ENCODE measurements at regions of chr4 and their contacts with region 1.

Region 1: GRCh38 chr4:69881173-69881773 is 21.3 kb upstream of the SULT1E1 start:
- DNase-seq: peak; percentile 61
- H3K4me3 ChIP-seq: no peak overlapping the region
- H3K27ac ChIP-seq: peak overlapping the region; percentile 17
- H3K4me1 ChIP-seq: peaks cover 6% of the 10 kb centered on the region
- H3K27me3 ChIP-seq: no peaks in the 10 kb centered on the region
- CTCF ChIP-seq: peak; percentile 70 to 81
- POLR2A ChIP-seq: no peak

Region 2: GRCh38 chr4:69322055-69322454 is 559.2 kb before region 1 on chr4:
- CTCF ChIA-PET with region 1: interaction called, 8 read pairs
- POLR2A ChIA-PET with region 1: no interaction called
- dilution Hi-C with region 1: no loop called
- intact Hi-C with region 1: loop called (anchors 1 kb)
- DNase-seq: no peak
- H3K4me3 ChIP-seq: no peak overlapping the region
- H3K27ac ChIP-seq: no peak overlapping the region
- H3K4me1 ChIP-seq: no peaks in the 10 kb centered on the region
- H3K27me3 ChIP-seq: no peaks in the 10 kb centered on the region
- CTCF ChIP-seq: no peak
- POLR2A ChIP-seq: no peak

Region 3: DNA sequence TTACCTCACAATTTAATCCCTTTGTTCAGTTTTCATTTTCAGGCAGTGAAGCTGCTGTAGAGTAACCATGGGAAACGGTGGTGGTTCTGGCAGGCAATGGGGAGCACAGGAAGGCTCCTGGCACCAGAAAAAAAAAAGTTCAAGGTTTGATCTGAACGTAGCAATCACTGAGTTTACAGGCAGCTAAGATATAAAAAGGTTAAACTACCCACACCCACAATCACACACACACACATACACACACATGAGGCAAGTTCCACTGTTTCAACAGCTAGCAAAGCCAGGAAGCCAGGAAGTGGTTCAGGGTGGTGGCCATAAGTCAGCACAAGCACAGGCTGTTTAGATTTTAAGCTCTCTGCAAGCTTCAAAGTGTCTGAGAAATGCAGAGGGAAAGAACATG is 120.8 kb before region 1 on chr4 and contains the start of gene SULT1B1:
- CTCF ChIA-PET with region 1: interaction called, 8 read pairs
- POLR2A ChIA-PET with region 1: no interaction called
- dilution Hi-C with region 1: no loop called
- intact Hi-C with region 1: loop called (anchors 1 kb)
- DNase-seq: peak; percentile 89
- H3K4me3 ChIP-seq: peak within 1 kb of the TSS; percentile 21 to 79 (median 27)
- H3K27ac ChIP-seq: peak within 1 kb of the TSS; percentile 95
- H3K4me1 ChIP-seq: peaks cover 69% of the 10 kb centered on the region
- H3K27me3 ChIP-seq: no peaks in the 10 kb centered on the region
- CTCF ChIP-seq: no peak
- POLR2A ChIP-seq: no peak
- total RNA-seq, gene SULT1B1: 59.5 and 68.2 TPM in 2 replicates

Region 4: DNA sequence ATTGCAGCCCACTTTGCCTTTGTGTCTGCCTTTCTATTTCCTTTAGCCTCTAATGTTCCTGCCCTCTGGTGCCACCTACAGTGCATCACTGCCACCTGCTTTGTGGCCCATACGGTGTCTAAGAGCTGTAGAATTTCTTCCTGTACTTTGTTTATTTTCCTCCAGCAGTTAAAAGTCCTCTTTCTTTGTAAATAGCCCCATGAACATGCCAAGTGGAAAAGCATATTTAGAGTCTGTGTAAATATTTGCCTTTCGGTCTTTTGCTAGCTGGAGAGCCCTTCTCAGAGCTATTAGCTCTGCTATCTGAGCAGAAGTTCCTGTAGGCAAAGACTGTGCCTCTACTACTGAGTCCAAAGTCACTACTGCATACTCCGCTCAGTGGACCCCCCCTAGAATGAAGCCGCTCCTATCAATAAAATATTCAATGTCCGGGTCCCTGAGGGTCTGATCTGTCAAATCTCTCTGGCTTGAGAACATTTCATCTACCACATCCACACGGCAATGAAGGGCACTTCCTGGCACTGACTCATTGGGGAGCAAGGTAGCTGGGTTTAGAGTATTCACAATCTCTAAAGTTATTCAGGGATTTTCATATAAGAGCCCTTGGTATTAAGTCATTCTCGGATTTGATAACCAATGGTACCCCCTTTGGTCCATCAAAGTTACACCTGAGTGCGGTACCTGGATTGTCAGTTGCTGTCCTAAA is 57.6 kb before region 1 on chr4:
- CTCF ChIA-PET with region 1: interaction called, 34 read pairs
- POLR2A ChIA-PET with region 1: interaction called, 3 read pairs
- dilution Hi-C with region 1: no loop called
- intact Hi-C with region 1: loop called (anchors 1 kb)
- DNase-seq: peak; percentile 76
- H3K4me3 ChIP-seq: no peak overlapping the region
- H3K27ac ChIP-seq: peak overlapping the region; percentile 22
- H3K4me1 ChIP-seq: peaks cover 11% of the 10 kb centered on the region
- H3K27me3 ChIP-seq: no peaks in the 10 kb centered on the region
- CTCF ChIP-seq: peak; percentile 57 to 59
- POLR2A ChIP-seq: no peak

Region 5: DNA sequence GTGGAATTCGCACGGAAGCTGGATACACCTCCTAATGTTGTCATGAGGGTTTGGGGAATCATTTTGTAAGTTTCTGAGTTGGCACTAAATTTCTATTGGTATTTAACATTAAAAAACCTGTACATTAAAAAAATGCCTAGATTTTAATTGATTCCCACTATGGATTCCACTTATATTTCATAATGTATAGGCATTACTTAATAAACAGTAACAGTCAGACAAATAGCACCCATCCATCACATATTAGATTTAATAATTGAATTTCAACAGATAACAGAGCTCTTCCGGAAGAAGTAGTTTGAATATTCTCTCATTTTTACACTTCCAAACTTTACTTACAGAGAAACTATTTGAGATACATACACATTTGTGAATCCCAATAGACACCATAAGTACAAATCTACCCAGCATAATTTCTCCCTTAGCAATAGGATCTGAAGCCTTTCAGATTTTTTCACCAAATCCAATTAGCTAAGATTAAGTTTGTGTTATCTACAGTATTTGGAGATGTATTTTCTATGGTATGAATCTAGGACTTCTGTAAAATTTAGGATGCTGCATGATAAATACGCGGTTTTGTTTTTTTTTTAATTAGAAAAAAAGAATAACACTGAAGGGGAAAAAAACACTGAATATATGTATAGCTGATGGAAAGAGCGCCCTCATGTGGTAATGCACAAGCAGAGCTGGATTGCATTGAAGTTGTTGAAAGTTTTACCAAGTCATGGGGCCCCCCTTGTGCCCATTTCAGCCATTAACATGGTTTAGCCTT is 302.1 kb after region 1 on chr4:
- CTCF ChIA-PET with region 1: interaction called, 23 read pairs
- POLR2A ChIA-PET with region 1: no interaction called
- dilution Hi-C with region 1: no loop called
- intact Hi-C with region 1: loop called (anchors 1 kb)
- DNase-seq: peak; percentile 53
- H3K4me3 ChIP-seq: no peak overlapping the region
- H3K27ac ChIP-seq: no peak overlapping the region
- H3K4me1 ChIP-seq: no peaks in the 10 kb centered on the region
- H3K27me3 ChIP-seq: no peaks in the 10 kb centered on the region
- CTCF ChIP-seq: peak; percentile 72 to 80
- POLR2A ChIP-seq: no peak

Region 6: DNA sequence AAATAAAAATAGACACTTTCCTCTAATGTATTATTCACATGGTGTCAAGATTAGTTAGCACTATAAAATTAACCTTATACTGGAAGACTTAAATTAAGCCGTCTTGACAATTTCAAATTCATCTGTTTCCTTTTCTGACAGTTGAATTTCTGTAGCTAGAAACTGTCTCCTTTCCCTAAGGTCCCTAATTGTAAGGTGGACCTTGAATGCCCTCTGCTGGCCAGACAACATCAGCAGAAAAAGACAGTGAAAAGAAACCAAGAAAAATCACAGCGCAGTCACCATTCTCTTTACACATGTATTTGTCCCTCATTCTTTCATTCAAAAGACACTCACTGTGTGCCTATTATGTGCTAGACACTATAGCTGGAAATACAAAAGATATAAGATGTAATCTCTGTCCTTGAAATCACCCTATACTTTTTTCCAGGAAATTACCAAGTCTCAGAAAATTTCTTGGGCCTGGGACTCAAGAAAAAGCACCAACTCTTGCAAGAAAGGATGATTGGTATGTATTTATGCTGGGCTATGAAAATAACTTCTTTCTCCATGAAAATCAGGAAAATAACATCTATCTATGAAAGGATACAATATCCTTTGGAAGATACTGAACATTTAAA is 678.0 kb after region 1 on chr4:
- CTCF ChIA-PET with region 1: no interaction called
- POLR2A ChIA-PET with region 1: no interaction called
- dilution Hi-C with region 1: no loop called
- intact Hi-C with region 1: loop called (anchors 2 kb)
- DNase-seq: peak; percentile 47
- H3K4me3 ChIP-seq: no peak overlapping the region
- H3K27ac ChIP-seq: no peak overlapping the region
- H3K4me1 ChIP-seq: no peaks in the 10 kb centered on the region
- H3K27me3 ChIP-seq: no peaks in the 10 kb centered on the region
- CTCF ChIP-seq: peak; percentile 53 to 61
- POLR2A ChIP-seq: no peak